Activated CD4-positive, alpha-beta T cell treated with anti-CD3 and anti-CD28 coated beads, Interleukin-2, amount 10 ng/mL, durations not matched to agents 24 days and 14 days (primary cell): ENCODE measurements at regions of chr16 and their contacts with region 1.

Region 1: GRCh38 chr16:9134739-9135138 is 43.3 kb downstream of the HAPSTR1 start:
- DNase-seq: peak; percentile 89
- H3K4me3 Mint-ChIP-seq: no peak overlapping the region
- H3K27ac Mint-ChIP-seq: no peak overlapping the region
- H3K4me1 Mint-ChIP-seq: peaks cover 14% of the 10 kb centered on the region
- H3K27me3 Mint-ChIP-seq: peaks cover 6% of the 10 kb centered on the region

Region 2: DNA sequence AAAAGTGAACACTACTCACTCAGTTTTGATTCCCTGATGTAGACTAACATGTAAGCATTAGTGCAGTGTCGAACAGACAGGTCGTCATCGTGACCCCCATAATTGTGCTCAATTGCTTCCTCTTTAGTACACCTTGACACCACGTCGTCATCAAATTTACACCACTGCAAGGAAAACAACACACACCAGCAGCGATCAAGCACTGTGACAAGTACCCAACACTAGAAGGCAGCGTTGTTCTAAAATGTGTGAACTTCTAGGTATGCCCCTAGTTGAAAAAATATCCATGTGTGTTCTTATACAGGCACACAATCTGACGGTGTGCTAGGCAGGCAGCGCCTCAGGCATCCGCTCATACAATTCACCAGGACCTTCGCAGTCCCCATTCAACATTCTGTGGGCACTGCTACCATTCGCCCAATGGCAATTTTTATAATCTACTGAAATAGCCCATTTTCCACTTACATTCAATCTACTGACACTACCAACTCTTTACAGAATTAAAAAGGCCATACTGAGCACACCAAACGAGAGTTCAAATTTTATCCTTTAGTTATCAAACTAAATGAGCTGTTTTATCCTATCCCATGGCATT is 229.5 kb before region 1 on chr16:
- intact Hi-C with region 1: loop called (anchors 2 kb)
- DNase-seq: peak; percentile 75
- H3K4me3 Mint-ChIP-seq: no peak overlapping the region
- H3K27ac Mint-ChIP-seq: no peak overlapping the region
- H3K4me1 Mint-ChIP-seq: peaks cover 9% of the 10 kb centered on the region
- H3K27me3 Mint-ChIP-seq: no peaks in the 10 kb centered on the region

Region 3: DNA sequence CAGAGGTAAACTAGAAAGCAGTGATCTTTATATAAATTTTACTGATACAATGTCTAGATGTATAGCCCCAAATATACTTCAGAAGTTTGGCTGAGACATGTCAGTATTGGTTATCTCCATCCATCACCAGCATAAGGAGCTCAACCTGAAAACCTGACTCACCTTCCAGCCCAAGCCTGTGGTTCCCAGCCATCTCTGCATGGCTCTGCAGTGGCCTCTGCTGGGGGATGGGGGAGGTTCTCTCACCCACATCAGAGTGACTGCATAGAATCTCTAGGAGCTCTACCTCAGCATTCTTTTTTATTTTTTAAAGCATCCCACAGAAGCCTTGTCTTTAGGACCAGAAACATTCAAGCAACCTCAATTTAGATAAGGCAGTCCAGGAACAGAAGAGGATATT is 198.3 kb before region 1 on chr16:
- intact Hi-C with region 1: loop called (anchors 10 kb)
- DNase-seq: peak; percentile 91
- H3K4me3 Mint-ChIP-seq: no peak overlapping the region
- H3K27ac Mint-ChIP-seq: peak overlapping the region; percentile 32
- H3K4me1 Mint-ChIP-seq: peaks cover 48% of the 10 kb centered on the region
- H3K27me3 Mint-ChIP-seq: no peaks in the 10 kb centered on the region

Region 4: DNA sequence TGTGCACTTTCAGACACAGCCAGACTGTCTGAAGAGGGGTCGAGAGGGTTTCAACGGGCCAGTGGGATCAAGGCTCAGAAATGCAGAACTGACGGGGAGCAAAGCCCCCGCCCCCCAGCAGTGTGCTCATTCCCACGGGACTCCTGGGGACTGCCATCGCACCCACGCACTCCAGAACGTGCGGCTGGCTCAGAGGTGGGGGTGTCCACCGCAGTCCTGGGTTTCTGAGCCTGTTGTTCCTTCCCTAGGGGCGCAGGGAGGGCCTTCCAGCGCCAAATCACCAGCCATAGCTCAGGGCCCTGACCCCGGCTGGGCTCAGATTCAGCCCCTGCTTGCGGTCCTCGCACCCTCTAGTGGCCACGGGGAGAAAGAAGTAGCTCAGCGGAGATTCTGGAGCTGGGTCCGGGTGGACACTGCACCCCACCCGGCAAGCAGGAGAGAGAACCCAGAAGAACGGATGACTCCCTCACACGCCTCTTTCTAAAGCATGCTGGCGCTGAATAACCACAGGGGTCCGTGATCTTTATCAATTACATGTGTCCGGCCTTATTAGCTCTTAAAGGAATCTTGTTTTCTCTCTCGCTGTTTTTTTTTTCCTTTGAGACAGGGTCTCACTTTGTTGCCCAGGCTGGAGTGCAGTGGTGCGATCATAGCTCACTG is 126.0 kb before region 1 on chr16:
- intact Hi-C with region 1: loop called (anchors 5 kb)
- DNase-seq: peak; percentile 90
- H3K4me3 Mint-ChIP-seq: no peak overlapping the region
- H3K27ac Mint-ChIP-seq: no peak overlapping the region
- H3K4me1 Mint-ChIP-seq: no peaks in the 10 kb centered on the region
- H3K27me3 Mint-ChIP-seq: peaks cover 12% of the 10 kb centered on the region